GM12878 (cell line): ENCODE measurements at regions of chr11 and their contacts with region 1.

Region 1: DNA sequence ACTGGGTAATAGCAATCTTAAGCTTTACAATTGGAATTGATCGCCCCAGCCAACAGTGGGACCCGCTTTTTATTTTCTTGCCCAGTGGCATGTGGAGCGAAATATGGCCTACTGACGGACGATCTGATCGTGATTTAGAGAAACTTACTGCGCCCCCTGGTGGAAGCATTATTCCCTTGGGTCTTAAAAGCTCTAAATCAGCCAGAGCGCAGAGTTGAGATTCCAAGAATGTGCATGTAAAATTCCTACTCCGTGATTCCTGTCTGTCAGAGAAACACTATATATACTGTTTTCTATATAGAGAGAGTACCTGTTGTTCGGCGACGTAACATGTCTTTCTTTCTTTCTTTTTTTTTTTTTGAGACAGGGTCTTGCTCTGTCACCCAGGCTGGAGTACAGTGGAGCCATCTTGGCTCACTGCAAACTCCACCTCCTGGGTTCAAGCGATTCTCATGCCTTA is 3.7 kb upstream of the DPF2 start:
- DNase-seq: peak; percentile 43
- ATAC-seq: peak; percentile 60
- H3K4me3 ChIP-seq: no peak overlapping the region
- H3K27ac ChIP-seq: no peak overlapping the region
- H3K4me1 ChIP-seq: peaks cover 4% of the 10 kb centered on the region; the same call in 1 of the 2 replicates
- H3K27me3 ChIP-seq: no peaks in the 10 kb centered on the region
- CTCF ChIP-seq: peak; percentile 67 to 79 (median 72)
- EP300 ChIP-seq: no peak
- POLR2A ChIP-seq: no peak
- RAD21 ChIP-seq: peak; percentile 48

Region 2: GRCh38 chr11:65219930-65220213 is 110.1 kb before region 1 on chr11:
- CTCF ChIA-PET with region 1: interaction called, 121 read pairs
- POLR2A ChIA-PET with region 1: no interaction called
- RAD21 ChIA-PET with region 1: interaction called, 15 read pairs
- SMC1A ChIA-PET with region 1: interaction called, 4 read pairs
- in situ Hi-C with region 1: no loop called
- intact Hi-C with region 1: no loop called
- DNase-seq: no peak
- ATAC-seq: no peak
- H3K4me3 ChIP-seq: no peak overlapping the region
- H3K27ac ChIP-seq: no peak overlapping the region
- H3K4me1 ChIP-seq: no peaks in the 10 kb centered on the region
- H3K27me3 ChIP-seq: no peaks in the 10 kb centered on the region; a peak in 1 of 4 replicates
- CTCF ChIP-seq: no peak
- EP300 ChIP-seq: no peak
- POLR2A ChIP-seq: no peak
- RAD21 ChIP-seq: no peak

Region 3: GRCh38 chr11:65261591-65262380 is 68.2 kb before region 1 on chr11 and contains the start of gene POLA2:
- CTCF ChIA-PET with region 1: interaction called, 16 read pairs
- POLR2A ChIA-PET with region 1: interaction called, 19 read pairs
- RAD21 ChIA-PET with region 1: interaction called, 10 read pairs
- SMC1A ChIA-PET with region 1: interaction called, 11 read pairs
- in situ Hi-C with region 1: no loop called
- intact Hi-C with region 1: loop called (anchors 5 kb)
- DNase-seq: peak; percentile 92
- ATAC-seq: peak; percentile 93
- H3K4me3 ChIP-seq: peak within 1 kb of the TSS; percentile 92
- H3K27ac ChIP-seq: peak within 1 kb of the TSS; percentile 98
- H3K4me1 ChIP-seq: peaks cover 3% of the 10 kb centered on the region
- H3K27me3 ChIP-seq: no peaks in the 10 kb centered on the region
- CTCF ChIP-seq: no peak
- EP300 ChIP-seq: no peak
- POLR2A ChIP-seq: peak; percentile 94
- RAD21 ChIP-seq: no peak
- polyA plus RNA-seq, gene POLA2: 4.2 to 8.7 TPM

Region 4: GRCh38 chr11:65354265-65355012 is 24.5 kb after region 1 on chr11 and contains the start of gene TIGD3:
- CTCF ChIA-PET with region 1: interaction called, 27 read pairs
- POLR2A ChIA-PET with region 1: interaction called, 8 read pairs
- RAD21 ChIA-PET with region 1: interaction called, 9 read pairs
- SMC1A ChIA-PET with region 1: interaction called, 8 read pairs
- in situ Hi-C with region 1: no loop called
- intact Hi-C with region 1: no loop called
- DNase-seq: peak; percentile 75
- ATAC-seq: peak; percentile 98
- H3K4me3 ChIP-seq: peak within 1 kb of the TSS; percentile 89; the same call in 1 of the 2 replicates
- H3K27ac ChIP-seq: no peak within 1 kb of the TSS
- H3K4me1 ChIP-seq: peaks cover 4% of the 10 kb centered on the region
- H3K27me3 ChIP-seq: 0 out of 4 replicates have a peak, but pooled peaks cover 0 to 3% of the 10 kb centered on the region in 2 experiments
- CTCF ChIP-seq: 0 out of 6 replicates have a peak, but pooled peaks of 1 of the 3 experiments have one; percentile 1
- EP300 ChIP-seq: no peak
- POLR2A ChIP-seq: peak; percentile 84
- RAD21 ChIP-seq: no peak
- polyA plus RNA-seq, gene TIGD3: 0.13 TPM